ENCODE measurements at regions of chr15 and their contacts with region 1.

Region 1: GRCh38 chr15:52568601-52569256 is at the start of gene ARPP19:
- DNase-seq: peak; percentile 78 to 84 (median 80)
- H3K4me3 ChIP-seq: peak within 1 kb of the TSS; percentile 64 to 80
- H3K4me3 Mint-ChIP-seq: peak within 1 kb of the TSS; percentile 94 to 100 (median 96)
- H3K27ac ChIP-seq: peak within 1 kb of the TSS; percentile 98
- H3K27ac Mint-ChIP-seq: peak within 1 kb of the TSS; percentile 98 to 100 (median 100)
- H3K4me1 ChIP-seq: peaks cover 44% of the 10 kb centered on the region
- H3K4me1 Mint-ChIP-seq: peaks cover 31 to 46% (median 38%) of the 10 kb centered on the region in 4 donors
- H3K27me3 ChIP-seq: no peaks in the 10 kb centered on the region
- H3K27me3 Mint-ChIP-seq: no peaks in the 10 kb centered on the region
- total RNA-seq, gene ARPP19: 105 to 130 TPM

Region 2: GRCh38 chr15:52256366-52256765 is 312.4 kb before region 1 on chr15:
- CTCF ChIA-PET with region 1: interaction called, 4 read pairs
- POLR2A ChIA-PET with region 1: no interaction called
- intact Hi-C with region 1: loop called (anchors 10 kb)
- DNase-seq: peak; percentile 75 to 77 (median 76)
- H3K4me3 ChIP-seq: no peak overlapping the region
- H3K4me3 Mint-ChIP-seq: peak overlapping the region; percentile 63 to 90 (median 82)
- H3K27ac ChIP-seq: no peak overlapping the region
- H3K27ac Mint-ChIP-seq: peak overlapping the region; percentile 20 to 86 (median 72)
- H3K4me1 ChIP-seq: peaks cover 15% of the 10 kb centered on the region
- H3K4me1 Mint-ChIP-seq: peaks cover 10 to 26% (median 19%) of the 10 kb centered on the region in 4 donors
- H3K27me3 ChIP-seq: no peaks in the 10 kb centered on the region
- H3K27me3 Mint-ChIP-seq: no peaks in the 10 kb centered on the region

Region 3: DNA sequence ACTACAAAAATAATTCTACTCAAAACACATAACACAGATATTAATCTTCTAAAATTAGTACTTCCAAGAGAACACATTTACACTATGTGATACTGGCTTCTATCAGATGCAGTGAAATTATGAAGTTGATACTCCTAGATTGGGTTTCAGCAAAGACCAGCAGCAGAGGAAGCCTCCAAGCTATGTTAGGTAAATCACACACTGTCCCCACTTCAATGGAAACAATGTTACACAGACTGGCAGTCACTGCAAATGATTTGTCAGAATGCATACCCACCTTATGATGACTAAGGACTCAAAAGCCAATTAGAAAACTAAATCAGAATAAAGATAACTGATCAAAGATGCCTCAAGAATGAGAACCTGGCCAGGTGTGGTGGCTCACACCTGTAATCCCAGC is 183.1 kb before region 1 on chr15:
- CTCF ChIA-PET with region 1: no interaction called
- POLR2A ChIA-PET with region 1: no interaction called
- intact Hi-C with region 1: loop called (anchors 5 kb)
- DNase-seq: no peak
- H3K4me3 ChIP-seq: no peak overlapping the region
- H3K4me3 Mint-ChIP-seq: no peak overlapping the region
- H3K27ac ChIP-seq: no peak overlapping the region
- H3K27ac Mint-ChIP-seq: peak overlapping the region in 1 of 7 donors; percentile 48
- H3K4me1 ChIP-seq: no peaks in the 10 kb centered on the region
- H3K4me1 Mint-ChIP-seq: no peaks in the 10 kb centered on the region
- H3K27me3 ChIP-seq: no peaks in the 10 kb centered on the region
- H3K27me3 Mint-ChIP-seq: no peaks in the 10 kb centered on the region

Region 4: DNA sequence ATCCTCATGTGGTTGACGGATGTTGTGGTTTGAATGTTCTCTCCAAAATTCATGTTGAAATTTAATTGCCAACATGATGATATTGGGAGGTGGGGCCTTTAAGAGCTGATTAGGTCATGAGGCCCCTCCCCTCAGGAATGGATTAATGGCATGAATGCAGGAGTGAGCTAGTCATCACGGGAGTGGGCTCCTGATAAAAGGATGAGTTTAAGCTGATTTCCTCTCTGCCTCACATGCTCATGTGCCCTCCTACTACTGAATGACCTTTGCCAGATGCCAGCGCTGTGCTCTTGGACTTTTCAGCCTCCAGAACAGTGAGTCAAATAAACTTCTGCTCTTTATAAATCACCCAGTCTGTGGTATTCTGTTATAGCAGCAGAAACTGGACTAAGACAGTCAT is 151.2 kb before region 1 on chr15:
- CTCF ChIA-PET with region 1: no interaction called
- POLR2A ChIA-PET with region 1: no interaction called
- intact Hi-C with region 1: no loop called
- DNase-seq: no peak
- H3K4me3 ChIP-seq: no peak overlapping the region
- H3K4me3 Mint-ChIP-seq: no peak overlapping the region
- H3K27ac ChIP-seq: no peak overlapping the region
- H3K27ac Mint-ChIP-seq: no peak overlapping the region
- H3K4me1 ChIP-seq: no peaks in the 10 kb centered on the region
- H3K4me1 Mint-ChIP-seq: peaks cover 0 to 2% (median 0%) of the 10 kb centered on the region in 4 donors
- H3K27me3 ChIP-seq: no peaks in the 10 kb centered on the region
- H3K27me3 Mint-ChIP-seq: no peaks in the 10 kb centered on the region

Measured in CD4-positive, alpha-beta memory T cell (primary cell).